ENCODE measurements at regions of chr1 and their contacts with region 1.

Region 1: GRCh38 chr1:23979878-23980724 is at the start of gene SRSF10:
- DNase-seq: peak; percentile 97
- H3K4me3 ChIP-seq: peak within 1 kb of the TSS; percentile 94
- H3K27ac ChIP-seq: peak within 1 kb of the TSS; percentile 97
- H3K27me3 ChIP-seq: no peaks in the 10 kb centered on the region
- CTCF ChIP-seq: peak; percentile 46
- polyA plus RNA-seq, gene SRSF10: 98.7 and 140 TPM in 2 replicates

Region 2: DNA sequence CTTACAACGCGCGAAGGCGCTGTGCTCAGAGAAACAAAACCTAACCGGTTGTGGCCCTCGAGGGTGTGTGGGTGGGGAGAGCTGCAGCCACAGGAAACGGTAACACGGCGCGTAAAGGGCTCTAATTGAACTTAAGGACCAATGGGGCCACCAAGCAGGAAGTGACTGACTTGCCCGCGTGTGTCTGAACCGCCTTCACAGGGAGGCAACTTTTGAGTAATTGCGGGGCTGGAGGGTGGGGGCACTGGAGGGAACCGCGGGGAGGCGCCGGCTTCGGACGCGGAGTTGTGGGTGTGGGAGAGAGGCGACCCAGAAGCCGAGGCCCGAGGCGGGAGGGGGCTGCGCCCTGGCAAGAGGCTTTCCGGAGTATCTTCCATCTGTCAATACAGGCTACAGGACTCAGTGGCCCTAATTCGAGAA is 21.1 kb before region 1 on chr1:
- CTCF ChIA-PET with region 1: interaction called, 3 read pairs
- POLR2A ChIA-PET with region 1: interaction called, 12 read pairs
- DNase-seq: peak; percentile 69
- H3K4me3 ChIP-seq: peak overlapping the region; percentile 65
- H3K27ac ChIP-seq: peak overlapping the region; percentile 92
- H3K27me3 ChIP-seq: no peaks in the 10 kb centered on the region
- CTCF ChIP-seq: peak; percentile 61

Region 3: GRCh38 chr1:24047101-24047459 is 67.0 kb after region 1 on chr1:
- CTCF ChIA-PET with region 1: no interaction called
- POLR2A ChIA-PET with region 1: interaction called, 11 read pairs
- DNase-seq: no peak
- H3K4me3 ChIP-seq: no peak overlapping the region
- H3K27ac ChIP-seq: no peak overlapping the region
- H3K27me3 ChIP-seq: no peaks in the 10 kb centered on the region
- CTCF ChIP-seq: no peak

Measured in AG04450 (cell line).